ENCODE measurements at regions of chr18 and their contacts with region 1.

Region 1: DNA sequence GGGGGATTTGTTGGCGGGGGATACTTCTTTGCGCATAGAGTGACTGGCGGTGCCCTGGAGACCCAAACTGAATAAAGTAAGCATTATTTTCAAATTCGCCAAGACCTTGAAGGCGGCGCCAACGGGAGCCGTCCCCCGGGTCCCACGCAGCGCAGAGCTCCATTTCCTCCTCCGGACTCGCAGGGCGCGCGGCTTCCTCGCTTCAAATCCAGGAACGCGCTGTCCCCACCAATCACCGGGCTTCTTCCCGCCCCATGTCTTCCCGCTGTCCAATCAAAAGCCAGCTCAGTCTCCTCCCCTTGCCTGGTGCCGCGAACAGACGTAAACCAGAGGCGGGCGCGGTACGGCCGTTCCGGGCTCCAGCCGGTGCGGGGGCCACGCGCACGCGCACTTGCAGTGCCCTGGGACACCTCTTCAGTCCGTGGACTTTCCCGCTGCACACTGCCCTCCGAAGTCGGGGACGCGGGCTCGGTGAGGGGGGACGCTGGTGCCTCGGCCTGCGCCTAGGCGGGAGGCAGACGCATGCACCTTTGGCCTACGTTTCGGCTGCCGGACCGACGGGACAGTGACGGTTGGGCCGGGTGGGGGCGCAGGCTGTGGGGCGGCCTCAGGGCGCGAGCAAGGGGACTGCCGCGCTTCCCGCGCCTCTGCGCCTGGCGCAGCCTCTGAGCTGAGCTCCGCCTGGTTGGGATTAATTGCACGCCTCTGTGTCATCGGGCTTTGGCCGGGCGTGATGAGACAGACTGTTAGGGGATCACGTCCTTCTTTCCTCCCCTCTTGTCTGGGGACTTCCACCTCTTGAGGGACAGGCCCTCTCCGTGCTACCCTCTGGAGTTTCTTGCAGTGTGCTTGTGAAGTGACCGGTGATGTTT is at the start of gene CEP192:
- DNase-seq: peak; percentile 99
- ATAC-seq: peak; percentile 94
- H3K4me3 Mint-ChIP-seq: peak within 1 kb of the TSS; percentile 88
- H3K27ac Mint-ChIP-seq: peak within 1 kb of the TSS; percentile 92
- H3K4me1 Mint-ChIP-seq: peaks cover 21% of the 10 kb centered on the region
- H3K27me3 Mint-ChIP-seq: peaks cover 3% of the 10 kb centered on the region
- total RNA-seq, gene CEP192: 36.6 to 57.4 TPM

Region 2: GRCh38 chr18:13003466-13003896 is 12.3 kb after region 1 on chr18:
- CTCF ChIA-PET with region 1: interaction called, 11 read pairs
- DNase-seq: no peak
- ATAC-seq: peak; percentile 65
- H3K4me3 Mint-ChIP-seq: no peak overlapping the region
- H3K27ac Mint-ChIP-seq: no peak overlapping the region
- H3K4me1 Mint-ChIP-seq: peaks cover 25% of the 10 kb centered on the region
- H3K27me3 Mint-ChIP-seq: no peaks in the 10 kb centered on the region

Measured in activated CD8-positive, alpha-beta memory T cell treated with anti-CD3 and anti-CD28 coated beads, Interleukin-2, amount 10 ng/mL, durations not matched to agents 7 days and 5 days (primary cell).